PC-9 (cell line): ENCODE measurements at regions of chr2 and their contacts with region 1.

Region 1: DNA sequence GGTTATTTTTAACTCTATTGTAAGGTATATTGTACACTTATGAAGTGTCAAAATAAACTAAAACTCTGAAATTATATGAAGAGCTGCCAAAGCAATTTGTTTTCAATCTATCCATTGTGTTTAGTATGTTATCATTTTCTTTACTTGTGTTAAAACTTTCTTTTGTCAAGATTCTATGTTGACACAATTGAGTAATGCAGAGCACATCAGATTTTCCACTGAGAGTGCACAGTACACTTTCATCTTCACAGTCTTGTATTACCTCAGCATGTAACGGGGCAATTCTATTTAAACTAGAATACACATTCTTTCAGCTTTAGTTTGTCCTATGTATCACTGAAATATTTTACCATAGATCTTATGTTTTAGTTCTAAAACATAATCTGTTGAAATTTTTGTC is 304.4 kb upstream of the ZC3H15 start:
- DNase-seq: no peak
- H3K4me3 ChIP-seq: no peak overlapping the region
- H3K27ac ChIP-seq: no peak overlapping the region
- H3K4me1 ChIP-seq: no peaks in the 10 kb centered on the region
- H3K27me3 ChIP-seq: no peaks in the 10 kb centered on the region
- CTCF ChIP-seq: no peak

Region 2: GRCh38 chr2:186167140-186167539 is 14.5 kb before region 1 on chr2:
- CTCF ChIA-PET with region 1: no interaction called
- POLR2A ChIA-PET with region 1: interaction called, 13 read pairs
- intact Hi-C with region 1: no loop called
- DNase-seq: no peak
- H3K4me3 ChIP-seq: no peak overlapping the region
- H3K27ac ChIP-seq: no peak overlapping the region
- H3K4me1 ChIP-seq: no peaks in the 10 kb centered on the region
- H3K27me3 ChIP-seq: no peaks in the 10 kb centered on the region
- CTCF ChIP-seq: no peak

Region 3: DNA sequence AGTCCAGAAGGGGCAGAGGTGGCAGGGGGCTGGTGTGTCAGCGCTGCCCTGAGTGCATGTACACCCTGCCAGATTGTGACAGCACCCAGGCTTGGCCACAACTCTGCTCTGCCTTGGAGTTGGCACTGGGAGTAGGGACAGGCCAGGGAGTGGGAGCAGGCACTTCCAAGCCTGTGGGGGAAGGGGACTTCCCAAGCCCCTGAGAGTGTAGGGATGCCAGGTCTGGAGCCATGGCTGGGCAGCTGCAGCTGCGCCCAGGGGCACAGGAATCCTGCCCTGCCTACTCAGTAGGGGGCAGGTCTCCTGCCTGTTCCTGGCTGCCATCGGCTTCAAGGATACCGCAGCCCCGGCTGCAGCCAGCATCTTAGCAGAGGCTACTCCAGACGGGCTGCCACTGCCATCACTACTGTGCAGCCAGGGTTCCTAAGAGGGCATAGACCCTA is 1157.1 kb after region 1 on chr2:
- CTCF ChIA-PET with region 1: no interaction called
- POLR2A ChIA-PET with region 1: no interaction called
- intact Hi-C with region 1: no loop called
- DNase-seq: no peak
- H3K4me3 ChIP-seq: no peak overlapping the region
- H3K27ac ChIP-seq: no peak overlapping the region
- H3K4me1 ChIP-seq: no peaks in the 10 kb centered on the region
- H3K27me3 ChIP-seq: no peaks in the 10 kb centered on the region
- CTCF ChIP-seq: no peak